CD4-positive, alpha-beta memory T cell (primary cell): ENCODE measurements at regions of chr17 and their contacts with region 1.

Region 1: GRCh38 chr17:1764284-1764683 is 2.4 kb downstream of the SERPINF1 start:
- DNase-seq: peak; percentile 43 to 83 (median 76)
- H3K4me3 ChIP-seq: no peak overlapping the region
- H3K4me3 Mint-ChIP-seq: peak overlapping the region; percentile 40 to 86 (median 66)
- H3K27ac ChIP-seq: peak overlapping the region; percentile 43
- H3K27ac Mint-ChIP-seq: peak overlapping the region; percentile 51 to 97 (median 92)
- H3K4me1 ChIP-seq: peaks cover 34% of the 10 kb centered on the region
- H3K4me1 Mint-ChIP-seq: peaks cover 17 to 49% (median 22%) of the 10 kb centered on the region in 4 donors
- H3K27me3 ChIP-seq: no peaks in the 10 kb centered on the region
- H3K27me3 Mint-ChIP-seq: no peaks in the 10 kb centered on the region

Region 2: DNA sequence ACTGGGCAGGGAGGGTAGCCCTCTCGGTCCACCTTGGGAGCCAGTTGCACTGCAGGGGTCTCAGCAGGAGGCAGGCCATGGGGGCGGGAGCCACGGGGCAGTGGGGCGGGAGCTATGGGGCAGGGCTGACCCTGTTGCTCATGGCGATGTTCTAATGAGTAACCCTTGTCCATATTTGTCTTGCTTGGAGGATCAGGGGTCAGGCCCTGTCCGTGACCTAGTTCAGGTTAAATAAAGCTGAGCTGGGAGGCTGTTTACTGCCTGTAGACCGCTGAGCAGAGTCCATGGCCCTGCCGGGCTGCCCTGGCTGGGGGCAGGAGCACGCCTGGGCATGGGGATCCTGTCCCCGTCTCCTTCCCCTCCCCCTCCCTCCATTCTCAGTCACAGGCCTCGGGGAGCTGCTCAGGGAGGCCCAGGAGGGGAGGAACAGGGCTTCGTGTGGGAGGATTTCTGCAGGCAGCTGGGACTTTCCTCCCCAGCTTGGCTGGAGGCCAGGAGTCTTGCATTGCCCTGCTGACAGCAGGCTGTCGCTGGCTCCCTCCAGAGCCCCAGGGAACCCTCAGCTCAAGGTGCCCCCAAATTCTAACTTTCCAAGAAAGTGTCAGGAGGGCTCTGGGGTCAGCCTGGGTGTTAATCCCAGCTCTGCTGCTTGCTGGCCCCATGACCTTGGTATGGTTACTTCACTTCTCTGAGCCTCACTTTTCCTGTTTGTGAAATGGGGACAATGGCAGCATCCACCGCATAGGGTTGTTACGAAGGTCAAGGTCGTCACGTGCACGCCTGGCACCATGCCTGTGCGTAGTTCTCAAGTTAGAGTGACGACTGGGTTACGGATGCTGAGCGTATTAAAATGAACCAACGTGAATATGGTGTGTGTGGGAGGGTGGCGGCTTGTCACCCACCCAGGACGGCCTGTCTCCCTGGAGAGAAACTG is 27.7 kb before region 1 on chr17:
- CTCF ChIA-PET with region 1: interaction called, 3 read pairs
- POLR2A ChIA-PET with region 1: interaction called, 11 read pairs
- intact Hi-C with region 1: no loop called
- DNase-seq: peak in 4 of 5 donors; percentile 32 to 51 (median 44)
- H3K4me3 ChIP-seq: no peak overlapping the region
- H3K4me3 Mint-ChIP-seq: peak overlapping the region in 1 of 8 donors; percentile 45
- H3K27ac ChIP-seq: peak overlapping the region; percentile 32
- H3K27ac Mint-ChIP-seq: peak overlapping the region in 6 of 7 donors; percentile 36 to 92 (median 78)
- H3K4me1 ChIP-seq: peaks cover 15% of the 10 kb centered on the region
- H3K4me1 Mint-ChIP-seq: peaks cover 2 to 29% (median 5%) of the 10 kb centered on the region in 4 donors
- H3K27me3 ChIP-seq: no peaks in the 10 kb centered on the region
- H3K27me3 Mint-ChIP-seq: no peaks in the 10 kb centered on the region

Region 3: GRCh38 chr17:1752425-1753262 is 11.6 kb before region 1 on chr17:
- CTCF ChIA-PET with region 1: no interaction called
- POLR2A ChIA-PET with region 1: interaction called, 17 read pairs
- intact Hi-C with region 1: no loop called
- DNase-seq: no peak
- H3K4me3 ChIP-seq: no peak overlapping the region
- H3K4me3 Mint-ChIP-seq: no peak overlapping the region
- H3K27ac ChIP-seq: no peak overlapping the region
- H3K27ac Mint-ChIP-seq: peak overlapping the region in 2 of 7 donors; percentile 48 to 65
- H3K4me1 ChIP-seq: no peaks in the 10 kb centered on the region
- H3K4me1 Mint-ChIP-seq: peaks cover 0 to 4% (median 0%) of the 10 kb centered on the region in 4 donors
- H3K27me3 ChIP-seq: no peaks in the 10 kb centered on the region
- H3K27me3 Mint-ChIP-seq: peaks cover 0 to 2% of the 10 kb centered on the region in 2 donors

Region 4: GRCh38 chr17:1783834-1784611 is 19.7 kb after region 1 on chr17:
- CTCF ChIA-PET with region 1: interaction called, 13 read pairs
- POLR2A ChIA-PET with region 1: interaction called, 8 read pairs
- intact Hi-C with region 1: no loop called
- DNase-seq: peak in 4 of 5 donors; percentile 18 to 37 (median 31)
- H3K4me3 ChIP-seq: no peak overlapping the region
- H3K4me3 Mint-ChIP-seq: no peak overlapping the region
- H3K27ac ChIP-seq: no peak overlapping the region
- H3K27ac Mint-ChIP-seq: peak overlapping the region in 4 of 7 donors; percentile 10 to 74 (median 48)
- H3K4me1 ChIP-seq: no peaks in the 10 kb centered on the region
- H3K4me1 Mint-ChIP-seq: peaks cover 0 to 10% (median 1%) of the 10 kb centered on the region in 4 donors
- H3K27me3 ChIP-seq: no peaks in the 10 kb centered on the region
- H3K27me3 Mint-ChIP-seq: no peaks in the 10 kb centered on the region

Region 5: DNA sequence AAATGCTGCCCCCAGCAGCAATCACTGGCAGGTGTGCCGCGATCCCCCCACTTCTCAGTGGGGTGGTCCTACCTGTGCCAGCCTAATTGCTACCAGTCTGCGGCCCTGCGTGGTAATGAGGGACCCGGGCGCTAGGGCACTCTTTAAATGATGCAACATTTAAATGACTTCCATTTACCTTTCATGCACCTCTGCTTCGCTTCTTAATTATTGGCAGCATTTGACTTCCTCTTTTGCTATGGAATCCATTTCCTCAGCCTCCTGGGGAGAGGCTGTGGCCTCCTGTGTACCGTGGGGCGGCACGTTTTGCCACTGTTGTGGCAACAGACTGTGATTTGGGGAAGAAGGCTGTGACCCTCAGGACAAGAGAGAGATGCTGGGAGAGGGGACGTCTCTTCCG is 151.6 kb after region 1 on chr17:
- CTCF ChIA-PET with region 1: no interaction called
- POLR2A ChIA-PET with region 1: no interaction called
- intact Hi-C with region 1: no loop called
- DNase-seq: no peak
- H3K4me3 ChIP-seq: no peak overlapping the region
- H3K4me3 Mint-ChIP-seq: no peak overlapping the region
- H3K27ac ChIP-seq: no peak overlapping the region
- H3K27ac Mint-ChIP-seq: no peak overlapping the region
- H3K4me1 ChIP-seq: no peaks in the 10 kb centered on the region
- H3K4me1 Mint-ChIP-seq: no peaks in the 10 kb centered on the region
- H3K27me3 ChIP-seq: no peaks in the 10 kb centered on the region
- H3K27me3 Mint-ChIP-seq: peaks cover 14 to 17% of the 10 kb centered on the region in 2 donors